Endothelial cell of umbilical vein (primary cell): ENCODE measurements at regions of chr9 and their contacts with region 1.

Region 1: GRCh38 chr9:12425878-12426864 is 267.0 kb upstream of the TYRP1 start:
- DNase-seq: peak; percentile 64
- H3K4me3 ChIP-seq: no peak overlapping the region
- H3K27ac ChIP-seq: no peak overlapping the region
- H3K4me1 ChIP-seq: peaks cover 27% of the 10 kb centered on the region
- H3K27me3 ChIP-seq: no peaks in the 10 kb centered on the region
- CTCF ChIP-seq: peak; percentile 21 to 22
- POLR2A ChIP-seq: no peak

Region 2: DNA sequence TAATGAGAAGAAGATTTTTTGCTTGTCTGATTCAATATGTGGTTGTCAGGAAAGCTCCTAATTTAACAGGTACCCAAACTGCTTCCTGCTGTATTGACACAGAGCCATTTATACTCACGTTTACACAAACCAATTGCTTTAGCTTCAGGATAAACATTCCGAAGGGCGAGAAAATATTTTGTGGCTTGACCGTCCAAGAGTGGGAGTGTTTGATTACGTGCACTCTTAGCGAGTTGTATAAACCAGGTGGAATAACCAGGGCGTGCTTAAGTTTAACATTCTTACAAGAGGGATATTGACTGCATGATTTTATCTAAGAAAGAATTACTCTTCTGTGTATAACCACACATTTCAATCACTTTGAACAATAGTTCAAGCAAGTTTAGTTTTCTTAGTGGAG is 11.7 kb before region 1 on chr9:
- CTCF ChIA-PET with region 1: interaction called, 10 read pairs
- POLR2A ChIA-PET with region 1: no interaction called
- dilution Hi-C with region 1: no loop called
- intact Hi-C with region 1: no loop called
- DNase-seq: no peak
- H3K4me3 ChIP-seq: no peak overlapping the region
- H3K27ac ChIP-seq: no peak overlapping the region
- H3K4me1 ChIP-seq: no peaks in the 10 kb centered on the region
- H3K27me3 ChIP-seq: no peaks in the 10 kb centered on the region
- CTCF ChIP-seq: no peak
- POLR2A ChIP-seq: no peak

Region 3: DNA sequence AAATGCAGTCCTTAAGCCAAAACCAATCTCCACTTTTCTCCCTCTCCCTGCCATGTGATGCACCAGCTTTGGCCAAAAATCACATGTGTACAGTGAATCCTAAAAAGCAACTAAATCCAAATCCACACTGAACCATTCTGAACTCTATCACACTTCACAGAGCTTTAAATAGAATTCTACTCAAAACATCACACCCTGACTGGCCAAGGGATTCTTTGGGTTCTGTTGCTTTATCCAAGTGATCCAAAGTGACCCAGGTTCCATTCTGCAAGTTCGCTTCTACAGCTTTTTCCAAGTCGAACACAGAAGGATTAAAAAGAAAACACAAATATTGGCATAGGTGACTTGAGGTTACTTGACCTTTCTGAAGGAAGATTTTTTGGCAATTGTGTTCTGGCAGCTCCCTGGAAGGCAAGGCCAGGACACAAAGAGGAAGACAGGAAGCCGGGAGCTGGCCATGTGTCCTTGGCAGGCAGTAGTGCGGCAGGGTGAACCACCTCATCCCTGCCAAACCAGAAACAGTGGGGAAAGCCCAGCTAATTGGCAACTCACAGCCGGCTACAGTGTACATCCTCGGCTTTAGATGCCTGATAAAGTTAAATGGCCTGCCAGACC is 1772.8 kb after region 1 on chr9:
- CTCF ChIA-PET with region 1: no interaction called
- POLR2A ChIA-PET with region 1: no interaction called
- dilution Hi-C with region 1: no loop called
- intact Hi-C with region 1: no loop called
- DNase-seq: peak; percentile 62
- H3K4me3 ChIP-seq: no peak overlapping the region
- H3K27ac ChIP-seq: peak overlapping the region; percentile 59
- H3K4me1 ChIP-seq: peaks cover 60% of the 10 kb centered on the region
- H3K27me3 ChIP-seq: no peaks in the 10 kb centered on the region
- CTCF ChIP-seq: no peak
- POLR2A ChIP-seq: no peak